ENCODE measurements at regions of chr4 and their contacts with region 1.

Region 1: DNA sequence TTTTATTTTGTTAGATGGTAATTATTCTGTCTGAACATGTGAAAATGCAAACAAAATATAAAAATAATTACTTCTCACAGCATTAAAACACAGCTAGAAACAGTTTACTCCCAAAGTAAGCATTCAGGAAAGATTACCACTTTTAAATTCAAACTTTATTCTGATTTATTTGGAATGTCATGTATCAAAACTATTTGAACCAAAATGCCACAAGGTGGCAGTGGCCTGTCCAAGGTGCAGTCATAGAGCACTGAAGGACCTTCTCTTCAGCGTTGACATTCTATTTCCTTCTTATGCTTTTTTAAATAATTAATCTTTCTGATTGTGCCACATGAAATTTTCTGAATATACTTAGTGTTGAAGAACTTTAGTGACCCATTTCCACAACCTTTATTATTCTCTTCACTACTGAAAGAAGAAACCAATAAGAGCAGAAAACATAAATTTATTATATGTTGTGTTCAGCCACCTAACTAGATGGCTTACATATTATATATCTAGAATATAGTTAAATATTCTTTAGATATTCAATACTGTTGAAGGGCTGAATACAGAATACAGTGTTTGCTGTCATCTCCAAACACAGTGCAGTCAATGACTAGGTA is 283.6 kb downstream of the CFAP299 start:
- DNase-seq: no peak
- ATAC-seq: no peak
- H3K4me3 Mint-ChIP-seq: no peak overlapping the region
- H3K27ac Mint-ChIP-seq: no peak overlapping the region
- H3K4me1 Mint-ChIP-seq: no peaks in the 10 kb centered on the region
- H3K27me3 Mint-ChIP-seq: no peaks in the 10 kb centered on the region
- CTCF ChIP-seq: no peak

Region 2: DNA sequence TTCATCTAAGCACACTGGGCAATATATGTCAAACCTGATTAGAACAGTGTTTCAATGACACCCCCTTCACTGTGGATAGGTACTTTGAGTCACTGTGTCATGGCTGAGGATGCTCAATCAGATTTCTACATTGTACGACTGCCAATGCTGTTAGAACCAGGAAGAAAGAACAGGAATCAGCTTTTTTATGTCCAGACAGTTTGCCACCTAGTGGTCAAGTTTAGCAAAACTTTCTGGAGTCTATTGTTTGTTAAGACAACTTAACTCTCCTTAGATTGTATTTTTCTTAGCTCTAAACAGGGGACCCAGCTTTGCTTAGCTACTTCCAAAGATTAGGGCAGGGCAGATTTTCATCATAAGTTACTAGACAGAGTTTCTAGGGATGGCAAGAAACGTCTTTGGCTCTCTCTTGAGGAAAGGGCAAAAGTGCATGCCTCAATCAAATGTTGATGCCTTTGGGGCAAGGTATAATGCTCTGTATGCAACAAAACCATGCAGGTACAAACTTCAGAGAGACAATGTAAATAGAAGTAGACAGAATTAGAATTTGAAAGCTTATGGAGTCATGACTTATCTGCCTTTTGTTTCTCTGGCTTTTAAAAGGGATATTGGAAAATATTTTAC is 370.9 kb after region 1 on chr4:
- CTCF ChIA-PET with region 1: interaction called, 9 read pairs
- POLR2A ChIA-PET with region 1: no interaction called
- intact Hi-C with region 1: loop called (anchors 1 kb)
- DNase-seq: no peak
- ATAC-seq: peak; percentile 56
- H3K4me3 Mint-ChIP-seq: no peak overlapping the region
- H3K27ac Mint-ChIP-seq: no peak overlapping the region
- H3K4me1 Mint-ChIP-seq: peaks cover 31% of the 10 kb centered on the region
- H3K27me3 Mint-ChIP-seq: no peaks in the 10 kb centered on the region
- CTCF ChIP-seq: no peak